Prostate gland (tissue), 2 donors: ENCODE measurements at regions of chr1 and their contacts with region 1.

Region 1: GRCh38 chr1:147890177-147890790 is 12.3 kb upstream of the GJA8 start:
- DNase-seq: peak; percentile 10
- H3K4me3 ChIP-seq: no peak overlapping the region
- H3K27ac ChIP-seq: no peak overlapping the region
- H3K4me1 ChIP-seq: no peaks in the 10 kb centered on the region
- H3K27me3 ChIP-seq: no peaks in the 10 kb centered on the region
- CTCF ChIP-seq: peak in 3 of 4 experiments; percentile 29 to 66 (median 53)
- POLR2A ChIP-seq: no peak

Region 2: GRCh38 chr1:147494998-147495580 is 395.2 kb before region 1 on chr1:
- intact Hi-C with region 1: loop called (anchors 10 kb)
- DNase-seq: peak; percentile 67
- H3K4me3 ChIP-seq: no peak overlapping the region
- H3K27ac ChIP-seq: no peak overlapping the region
- H3K4me1 ChIP-seq: no peaks in the 10 kb centered on the region
- H3K27me3 ChIP-seq: no peaks in the 10 kb centered on the region
- CTCF ChIP-seq: peak; percentile 56 to 88 (median 86)
- POLR2A ChIP-seq: no peak

Region 3: DNA sequence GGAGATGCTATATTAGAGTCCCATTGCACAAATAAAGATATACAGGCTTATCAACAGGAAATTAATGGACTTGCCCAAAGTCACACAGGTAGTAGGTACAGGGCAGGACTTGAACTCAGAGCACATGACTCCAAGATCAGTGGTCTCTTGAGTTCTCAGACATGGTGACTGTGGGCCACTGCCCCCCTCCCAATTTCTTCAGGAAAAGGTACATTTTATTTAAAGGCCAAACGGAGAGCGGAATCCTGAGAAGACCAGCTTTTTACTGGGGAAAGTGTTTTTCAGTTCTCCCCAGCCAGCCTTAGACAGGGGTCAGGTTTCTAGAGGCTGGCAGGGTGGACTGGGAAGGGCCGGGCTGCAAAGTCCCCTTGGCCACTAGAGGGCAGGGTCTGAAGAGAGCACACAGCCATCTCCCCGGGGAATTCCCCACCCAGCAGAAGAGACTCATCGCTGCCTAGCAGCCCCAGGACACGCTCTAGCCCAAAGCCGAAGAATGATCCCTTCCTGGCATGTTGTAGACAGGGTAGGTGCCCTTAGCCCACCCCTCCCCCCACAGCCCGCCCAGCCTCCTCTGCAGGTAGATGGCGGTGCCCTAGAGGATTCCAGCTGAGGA is 249.6 kb before region 1 on chr1:
- intact Hi-C with region 1: loop called (anchors 5 kb)
- DNase-seq: peak; percentile 68
- H3K4me3 ChIP-seq: no peak overlapping the region
- H3K27ac ChIP-seq: no peak overlapping the region
- H3K4me1 ChIP-seq: no peaks in the 10 kb centered on the region
- H3K27me3 ChIP-seq: no peaks in the 10 kb centered on the region
- CTCF ChIP-seq: peak; percentile 61 to 80 (median 70)
- POLR2A ChIP-seq: no peak

Region 4: GRCh38 chr1:147723691-147724323 is 166.5 kb before region 1 on chr1:
- intact Hi-C with region 1: loop called (anchors 1 kb)
- DNase-seq: no peak
- H3K4me3 ChIP-seq: no peak overlapping the region
- H3K27ac ChIP-seq: no peak overlapping the region
- H3K4me1 ChIP-seq: no peaks in the 10 kb centered on the region
- H3K27me3 ChIP-seq: no peaks in the 10 kb centered on the region
- CTCF ChIP-seq: peak in 3 of 4 experiments; percentile 11 to 55 (median 47)
- POLR2A ChIP-seq: no peak